ENCODE measurements at regions of chr14 and their contacts with region 1.

Region 1: GRCh38 chr14:101767618-101768362 is 6.3 kb downstream of the PPP2R5C start:
- DNase-seq: no peak
- H3K4me3 ChIP-seq: no peak overlapping the region
- H3K27ac ChIP-seq: peak overlapping the region in 1 of 2 experiments; percentile 28; a peak in 1 of 4 replicates
- H3K4me1 ChIP-seq: peaks cover 0 to 24% of the 10 kb centered on the region in 2 experiments; a peak in 2 of 4 replicates
- H3K27me3 ChIP-seq: no peaks in the 10 kb centered on the region
- CTCF ChIP-seq: no peak
- EP300 ChIP-seq: no peak
- RAD21 ChIP-seq: no peak

Region 2: GRCh38 chr14:101707068-101707842 is 60.5 kb before region 1 on chr14:
- CTCF ChIA-PET with region 1: interaction called, 21 read pairs
- POLR2A ChIA-PET with region 1: no interaction called
- DNase-seq: peak; percentile 83
- H3K4me3 ChIP-seq: peak overlapping the region in 1 of 2 experiments; percentile 16; a peak in 1 of 4 replicates
- H3K27ac ChIP-seq: no peak overlapping the region
- H3K4me1 ChIP-seq: peaks cover 0 to 9% of the 10 kb centered on the region in 2 experiments; a peak in 1 of 4 replicates
- H3K27me3 ChIP-seq: no peaks in the 10 kb centered on the region
- CTCF ChIP-seq: peak; percentile 80
- EP300 ChIP-seq: no peak
- RAD21 ChIP-seq: peak; percentile 95

Region 3: GRCh38 chr14:101809671-101810514 is 42.1 kb after region 1 on chr14:
- CTCF ChIA-PET with region 1: interaction called, 33 read pairs
- POLR2A ChIA-PET with region 1: interaction called, 6 read pairs
- DNase-seq: peak; percentile 80
- H3K4me3 ChIP-seq: peak overlapping the region; percentile 79 to 86
- H3K27ac ChIP-seq: peak overlapping the region; percentile 98 to 99
- H3K4me1 ChIP-seq: peaks cover 14 to 41% of the 10 kb centered on the region in 2 experiments; a peak in 3 of 4 replicates
- H3K27me3 ChIP-seq: no peaks in the 10 kb centered on the region
- CTCF ChIP-seq: no peak
- EP300 ChIP-seq: 0 out of 4 replicates have a peak, but pooled peaks of 1 of the 2 experiments have one; percentile 16
- RAD21 ChIP-seq: peak; percentile 25; the same call in 1 of the 2 replicates

Region 4: DNA sequence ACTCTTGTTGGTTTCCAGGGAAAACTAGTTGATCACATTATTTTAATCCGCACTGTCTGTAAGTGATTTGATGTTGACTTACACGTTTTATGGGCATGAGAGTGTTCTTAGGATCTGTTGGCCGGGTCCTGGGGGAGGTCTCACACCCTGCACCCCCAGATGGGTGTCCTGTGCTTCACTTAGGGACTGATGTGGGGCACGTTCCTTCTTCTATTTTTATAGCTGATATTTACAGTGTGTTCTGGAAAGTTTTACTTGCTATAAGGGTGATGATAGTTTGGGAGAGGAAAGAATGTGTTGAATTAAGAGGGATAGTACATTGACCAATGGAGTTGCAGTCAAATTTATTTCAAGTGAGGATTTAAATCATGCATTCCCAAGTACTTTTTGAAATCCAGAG is 100.1 kb after region 1 on chr14:
- CTCF ChIA-PET with region 1: interaction called, 11 read pairs
- POLR2A ChIA-PET with region 1: no interaction called
- DNase-seq: no peak
- H3K4me3 ChIP-seq: no peak overlapping the region
- H3K27ac ChIP-seq: no peak overlapping the region
- H3K4me1 ChIP-seq: peaks cover 0 to 2% of the 10 kb centered on the region in 2 experiments; a peak in 1 of 4 replicates
- H3K27me3 ChIP-seq: no peaks in the 10 kb centered on the region
- CTCF ChIP-seq: no peak
- EP300 ChIP-seq: no peak
- RAD21 ChIP-seq: no peak

Region 5: DNA sequence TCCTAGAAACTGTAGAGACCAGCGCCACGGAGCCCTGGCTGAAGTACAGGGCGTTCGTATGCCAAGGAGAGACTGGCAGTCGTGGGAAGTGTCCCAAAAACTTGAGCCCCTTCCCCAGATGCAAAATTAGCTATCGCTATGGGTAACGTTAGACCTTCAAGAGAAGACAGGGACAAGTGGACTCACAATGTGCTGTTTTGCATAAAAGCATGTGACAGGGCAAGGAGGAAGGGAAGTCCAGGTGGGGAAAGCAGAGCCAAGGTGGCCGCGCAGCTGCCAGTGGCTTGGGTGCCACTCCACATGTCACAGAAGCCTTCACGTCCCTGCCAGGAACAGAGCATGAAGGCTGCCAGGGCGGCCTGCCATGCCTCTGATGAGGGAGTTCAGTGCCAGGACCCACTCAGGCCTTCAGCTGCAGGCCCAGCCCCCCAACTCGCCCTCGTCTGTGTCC is 135.3 kb after region 1 on chr14:
- CTCF ChIA-PET with region 1: interaction called, 12 read pairs
- POLR2A ChIA-PET with region 1: interaction called, 4 read pairs
- DNase-seq: no peak
- H3K4me3 ChIP-seq: no peak overlapping the region
- H3K27ac ChIP-seq: no peak overlapping the region
- H3K4me1 ChIP-seq: no peaks in the 10 kb centered on the region
- H3K27me3 ChIP-seq: no peaks in the 10 kb centered on the region
- CTCF ChIP-seq: no peak
- EP300 ChIP-seq: no peak
- RAD21 ChIP-seq: no peak

Region 6: DNA sequence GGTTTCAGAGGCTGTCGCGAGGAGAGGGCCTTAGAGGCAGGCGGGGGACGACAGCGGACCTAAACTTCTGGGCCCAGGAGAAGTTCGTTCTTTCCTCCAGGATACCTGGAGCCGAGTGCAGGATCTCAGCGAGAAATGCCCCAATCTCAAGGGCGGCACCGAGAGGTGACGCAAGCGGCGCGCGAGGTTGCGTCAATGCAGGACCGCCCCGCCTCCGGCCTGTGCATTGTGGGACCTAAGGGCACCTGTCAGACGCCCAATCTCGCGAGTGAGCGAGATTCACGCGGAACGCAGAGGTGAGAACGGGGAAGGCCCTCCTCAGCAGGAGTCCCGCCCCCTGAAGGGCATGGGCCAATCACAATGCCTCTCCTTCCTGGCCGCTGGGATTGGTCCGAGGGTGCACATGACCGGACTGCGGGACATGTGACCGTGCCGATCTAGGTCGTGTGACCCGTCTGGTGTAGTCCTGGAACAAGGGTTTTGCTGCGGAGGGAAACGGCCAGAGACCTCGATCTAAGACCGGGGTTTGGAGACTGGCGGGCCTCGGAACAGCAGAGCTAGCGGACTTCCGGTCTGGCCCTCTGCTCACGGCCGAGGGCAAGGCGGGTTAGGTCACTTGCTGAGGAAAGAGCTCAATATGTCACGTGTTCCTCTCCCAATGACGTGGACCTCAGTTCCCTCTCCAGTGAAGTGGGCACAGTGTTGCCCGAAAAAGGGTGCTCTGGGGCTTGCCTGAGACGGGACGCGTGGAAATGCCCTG is 180.3 kb after region 1 on chr14:
- CTCF ChIA-PET with region 1: interaction called, 31 read pairs
- POLR2A ChIA-PET with region 1: interaction called, 7 read pairs
- DNase-seq: peak; percentile 97
- H3K4me3 ChIP-seq: peak overlapping the region; percentile 83 to 91
- H3K27ac ChIP-seq: peak overlapping the region; percentile 86 to 94
- H3K4me1 ChIP-seq: peaks cover 0 to 13% of the 10 kb centered on the region in 2 experiments; a peak in 1 of 4 replicates
- H3K27me3 ChIP-seq: no peaks in the 10 kb centered on the region
- CTCF ChIP-seq: no peak
- EP300 ChIP-seq: no peak
- RAD21 ChIP-seq: no peak